B cell (primary cell): ENCODE measurements at regions of chr20 and their contacts with region 1.

Region 1: DNA sequence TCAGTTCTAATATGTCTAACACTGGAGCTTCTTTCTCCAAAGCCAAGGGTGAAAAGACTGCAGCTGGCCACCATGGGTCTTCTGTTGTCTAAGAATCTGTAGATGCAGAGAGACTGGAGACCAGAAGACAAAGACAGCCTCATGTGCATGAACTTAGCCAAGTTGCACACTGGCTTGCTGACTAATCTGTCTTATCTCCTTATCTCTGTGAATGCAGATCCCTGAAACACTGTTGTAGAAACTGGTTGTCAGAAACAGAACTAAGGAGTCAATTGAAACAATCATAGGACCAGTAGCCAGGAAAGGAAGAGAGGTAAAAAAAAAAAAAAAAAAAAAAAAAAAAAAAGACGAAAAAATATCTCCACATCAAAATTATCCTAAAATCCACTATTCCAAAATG is 109.7 kb downstream of the BFSP1 start:
- DNase-seq: no peak
- ATAC-seq: no peak
- H3K4me3 ChIP-seq: no peak overlapping the region
- H3K4me3 Mint-ChIP-seq: no peak overlapping the region
- H3K27ac ChIP-seq: no peak overlapping the region
- H3K27ac Mint-ChIP-seq: no peak overlapping the region
- H3K4me1 ChIP-seq: no peaks in the 10 kb centered on the region
- H3K4me1 Mint-ChIP-seq: no peaks in the 10 kb centered on the region
- H3K27me3 ChIP-seq: peaks cover 0 to 7% (median 2%) of the 10 kb centered on the region in 4 experiments
- H3K27me3 Mint-ChIP-seq: peaks cover 9% of the 10 kb centered on the region
- CTCF ChIP-seq: no peak

Region 2: GRCh38 chr20:17129089-17129488 is 292.4 kb before region 1 on chr20:
- CTCF ChIA-PET with region 1: no interaction called
- POLR2A ChIA-PET with region 1: no interaction called
- intact Hi-C with region 1: no loop called
- DNase-seq: no peak
- ATAC-seq: no peak
- H3K4me3 ChIP-seq: no peak overlapping the region
- H3K4me3 Mint-ChIP-seq: no peak overlapping the region
- H3K27ac ChIP-seq: no peak overlapping the region
- H3K27ac Mint-ChIP-seq: no peak overlapping the region
- H3K4me1 ChIP-seq: no peaks in the 10 kb centered on the region
- H3K4me1 Mint-ChIP-seq: no peaks in the 10 kb centered on the region
- H3K27me3 ChIP-seq: no peaks in the 10 kb centered on the region
- H3K27me3 Mint-ChIP-seq: no peaks in the 10 kb centered on the region
- CTCF ChIP-seq: no peak

Region 3: GRCh38 chr20:17431621-17432364 is 10.3 kb after region 1 on chr20:
- CTCF ChIA-PET with region 1: interaction called, 38 read pairs
- POLR2A ChIA-PET with region 1: no interaction called
- intact Hi-C with region 1: no loop called
- DNase-seq: peak; percentile 57
- ATAC-seq: no peak
- H3K4me3 ChIP-seq: no peak overlapping the region
- H3K4me3 Mint-ChIP-seq: no peak overlapping the region
- H3K27ac ChIP-seq: no peak overlapping the region
- H3K27ac Mint-ChIP-seq: no peak overlapping the region
- H3K4me1 ChIP-seq: no peaks in the 10 kb centered on the region
- H3K4me1 Mint-ChIP-seq: no peaks in the 10 kb centered on the region
- H3K27me3 ChIP-seq: peaks cover 0 to 11% (median 2%) of the 10 kb centered on the region in 4 experiments
- H3K27me3 Mint-ChIP-seq: peaks cover 27% of the 10 kb centered on the region
- CTCF ChIP-seq: peak; percentile 95